ENCODE measurements at regions of chr19 and their contacts with region 1.

Region 1: DNA sequence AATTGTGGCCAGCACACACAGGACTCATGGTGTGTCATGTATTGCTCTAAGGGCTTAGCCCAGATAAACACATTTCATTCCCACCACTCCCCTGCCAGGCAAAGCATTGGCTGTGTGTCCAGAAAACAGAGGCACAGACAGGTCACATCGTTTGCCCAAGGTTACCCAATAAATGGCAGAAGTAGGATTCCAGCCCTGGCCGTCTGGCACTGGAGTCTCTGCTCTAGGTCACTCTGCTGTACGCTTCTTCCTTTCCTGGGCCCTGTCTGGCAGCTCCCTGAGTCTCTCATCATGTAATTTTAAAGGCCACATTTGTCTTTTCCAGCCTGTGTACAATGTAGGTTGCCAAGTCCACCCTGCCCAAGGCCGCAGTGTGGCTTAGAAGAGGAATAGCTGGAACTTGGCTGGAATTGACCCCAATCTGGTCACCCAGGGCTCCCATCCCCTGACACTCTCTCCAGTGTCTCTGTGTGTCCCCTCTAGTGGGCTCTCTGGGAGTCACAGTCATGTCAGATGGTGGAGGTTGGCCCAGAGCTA is 264.5 kb upstream of the TSHZ3 start:
- DNase-seq: no peak
- H3K4me3 ChIP-seq: no peak overlapping the region
- H3K27ac ChIP-seq: no peak overlapping the region
- H3K4me1 ChIP-seq: no peaks in the 10 kb centered on the region
- H3K27me3 ChIP-seq: no peaks in the 10 kb centered on the region
- CTCF ChIP-seq: no peak

Region 2: DNA sequence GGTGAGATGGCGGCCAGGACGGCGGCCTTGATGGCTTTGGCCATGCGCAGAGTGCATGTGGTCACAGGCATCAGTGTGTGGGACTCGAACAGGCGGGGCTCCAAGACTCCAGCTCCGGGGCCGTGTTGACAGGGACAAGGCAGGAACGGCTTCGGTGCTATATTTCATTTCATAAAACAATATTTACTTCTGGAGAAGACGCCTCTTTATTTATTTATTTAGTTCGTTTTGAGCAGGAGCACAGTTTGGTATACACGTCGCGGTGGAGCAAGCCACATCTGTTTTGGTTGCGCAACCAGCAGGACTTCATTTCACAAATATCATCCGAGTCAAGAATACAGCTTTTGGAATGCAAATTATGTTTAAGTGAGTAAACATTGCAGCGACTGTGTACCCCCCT is 97.8 kb before region 1 on chr19:
- CTCF ChIA-PET with region 1: no interaction called
- POLR2A ChIA-PET with region 1: no interaction called
- intact Hi-C with region 1: no loop called
- DNase-seq: no peak
- H3K4me3 ChIP-seq: no peak overlapping the region
- H3K27ac ChIP-seq: no peak overlapping the region
- H3K4me1 ChIP-seq: no peaks in the 10 kb centered on the region
- H3K27me3 ChIP-seq: no peaks in the 10 kb centered on the region
- CTCF ChIP-seq: no peak

Region 3: GRCh38 chr19:31678421-31678820 is 64.7 kb after region 1 on chr19:
- CTCF ChIA-PET with region 1: no interaction called
- POLR2A ChIA-PET with region 1: no interaction called
- intact Hi-C with region 1: loop called (anchors 2 kb)
- DNase-seq: no peak
- H3K4me3 ChIP-seq: no peak overlapping the region
- H3K27ac ChIP-seq: no peak overlapping the region
- H3K4me1 ChIP-seq: no peaks in the 10 kb centered on the region
- H3K27me3 ChIP-seq: no peaks in the 10 kb centered on the region
- CTCF ChIP-seq: no peak

Measured in A673 (cell line).